ENCODE measurements at regions of chr10 and their contacts with region 1.

Region 1: GRCh38 chr10:17228091-17228940 is at the start of gene VIM:
- DNase-seq: peak; percentile 90
- H3K4me3 Mint-ChIP-seq: peak within 1 kb of the TSS; percentile 80
- H3K27ac Mint-ChIP-seq: peak within 1 kb of the TSS; percentile 73
- H3K4me1 Mint-ChIP-seq: peaks cover 45% of the 10 kb centered on the region
- H3K27me3 Mint-ChIP-seq: peaks cover 2% of the 10 kb centered on the region
- total RNA-seq, gene VIM: 58.3 to 60.6 TPM

Region 2: GRCh38 chr10:16891375-16892313 is 336.7 kb before region 1 on chr10:
- CTCF ChIA-PET with region 1: no interaction called
- intact Hi-C with region 1: loop called (anchors 1 kb)
- DNase-seq: peak; percentile 71
- H3K4me3 Mint-ChIP-seq: peak overlapping the region; percentile 52
- H3K27ac Mint-ChIP-seq: peak overlapping the region; percentile 69
- H3K4me1 Mint-ChIP-seq: peaks cover 8% of the 10 kb centered on the region
- H3K27me3 Mint-ChIP-seq: no peaks in the 10 kb centered on the region

Region 3: DNA sequence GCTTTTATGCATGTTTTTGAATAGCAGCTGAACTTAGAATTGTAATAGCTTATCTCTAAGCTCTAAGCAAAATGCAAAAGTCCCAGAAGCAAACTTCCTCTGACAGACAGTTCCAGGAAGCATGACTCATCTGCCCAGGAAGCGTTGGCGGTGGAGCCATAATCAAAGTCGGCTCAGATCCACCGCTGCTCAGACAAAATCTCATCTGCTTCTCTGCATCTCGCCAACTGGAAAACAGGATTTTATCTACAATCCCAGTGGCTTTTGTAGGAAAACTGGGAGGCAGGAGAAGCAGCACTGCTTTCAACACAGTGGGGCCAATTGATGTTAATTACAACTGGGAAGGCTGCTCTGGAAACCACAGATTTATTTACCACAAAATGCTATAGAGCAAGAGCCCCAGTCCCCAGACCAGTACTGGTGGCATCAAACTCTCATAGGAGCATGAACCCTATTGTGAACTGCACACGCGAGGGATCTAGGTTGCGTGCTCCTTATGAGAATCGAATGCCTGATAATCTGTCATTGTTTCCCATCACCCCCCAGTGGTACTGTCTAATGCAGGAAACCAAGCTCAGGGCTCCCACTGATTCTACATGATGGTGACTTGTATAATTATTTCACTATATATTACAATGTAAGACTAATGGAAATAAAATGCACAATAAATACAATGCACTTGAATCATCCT is 198.6 kb before region 1 on chr10:
- CTCF ChIA-PET with region 1: interaction called, 3 read pairs
- intact Hi-C with region 1: loop called (anchors 1 kb)
- DNase-seq: peak; percentile 94
- H3K4me3 Mint-ChIP-seq: peak overlapping the region; percentile 61
- H3K27ac Mint-ChIP-seq: peak overlapping the region; percentile 83
- H3K4me1 Mint-ChIP-seq: peaks cover 69% of the 10 kb centered on the region
- H3K27me3 Mint-ChIP-seq: no peaks in the 10 kb centered on the region

Region 4: GRCh38 chr10:17088118-17088806 is 140.1 kb before region 1 on chr10:
- CTCF ChIA-PET with region 1: no interaction called
- intact Hi-C with region 1: no loop called
- DNase-seq: no peak
- H3K4me3 Mint-ChIP-seq: no peak overlapping the region
- H3K27ac Mint-ChIP-seq: no peak overlapping the region
- H3K4me1 Mint-ChIP-seq: no peaks in the 10 kb centered on the region
- H3K27me3 Mint-ChIP-seq: no peaks in the 10 kb centered on the region

Region 5: DNA sequence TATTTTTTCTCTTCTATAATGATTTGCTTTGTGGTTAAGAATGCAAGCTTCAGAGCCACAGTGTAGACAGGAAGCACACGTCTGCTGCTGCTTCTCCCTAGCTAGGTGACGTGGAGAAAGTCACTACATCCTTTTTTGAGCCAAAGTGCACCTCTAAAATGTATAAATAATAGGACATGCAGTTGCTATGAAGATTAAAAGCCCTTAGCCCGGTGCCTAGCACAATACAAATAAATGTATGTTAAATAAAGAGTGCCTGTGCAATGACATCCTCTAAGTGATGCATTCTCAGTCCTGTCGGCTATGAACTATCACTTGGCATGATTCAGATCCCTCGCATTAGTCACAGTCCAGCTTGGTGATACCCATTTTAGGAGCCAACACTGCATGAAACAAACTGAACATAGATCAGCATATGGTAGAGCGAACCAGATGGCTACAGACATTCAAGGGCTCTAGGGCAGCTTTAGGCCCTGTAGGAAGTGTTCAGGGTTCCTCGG is 22.1 kb before region 1 on chr10:
- CTCF ChIA-PET with region 1: interaction called, 19 read pairs
- intact Hi-C with region 1: loop called (anchors 1 kb)
- DNase-seq: peak; percentile 60
- H3K4me3 Mint-ChIP-seq: peak overlapping the region; percentile 3
- H3K27ac Mint-ChIP-seq: peak overlapping the region; percentile 54
- H3K4me1 Mint-ChIP-seq: peaks cover 23% of the 10 kb centered on the region
- H3K27me3 Mint-ChIP-seq: no peaks in the 10 kb centered on the region

Region 6: DNA sequence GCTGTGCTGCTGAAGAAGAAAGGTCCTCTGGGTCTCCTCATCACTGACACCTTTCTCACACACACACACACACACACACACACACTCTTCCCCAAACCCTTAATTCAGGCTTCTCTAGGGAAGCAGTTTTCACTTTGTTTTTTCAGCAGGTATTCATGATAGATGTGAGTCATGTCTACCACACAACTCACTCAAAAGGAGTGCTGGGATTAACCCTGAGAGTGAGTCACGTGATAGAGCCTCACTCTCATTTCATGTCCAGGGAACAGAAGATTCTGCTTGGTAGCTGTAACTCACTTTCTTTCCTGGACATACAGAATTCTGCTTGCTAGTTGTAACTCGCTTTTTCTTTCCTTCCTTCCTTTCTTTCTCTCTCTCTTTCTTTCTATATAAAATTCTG is 45.1 kb after region 1 on chr10:
- CTCF ChIA-PET with region 1: no interaction called
- intact Hi-C with region 1: no loop called
- DNase-seq: peak; percentile 25
- H3K4me3 Mint-ChIP-seq: no peak overlapping the region
- H3K27ac Mint-ChIP-seq: no peak overlapping the region
- H3K4me1 Mint-ChIP-seq: peaks cover 8% of the 10 kb centered on the region
- H3K27me3 Mint-ChIP-seq: peaks cover 3% of the 10 kb centered on the region

Region 7: DNA sequence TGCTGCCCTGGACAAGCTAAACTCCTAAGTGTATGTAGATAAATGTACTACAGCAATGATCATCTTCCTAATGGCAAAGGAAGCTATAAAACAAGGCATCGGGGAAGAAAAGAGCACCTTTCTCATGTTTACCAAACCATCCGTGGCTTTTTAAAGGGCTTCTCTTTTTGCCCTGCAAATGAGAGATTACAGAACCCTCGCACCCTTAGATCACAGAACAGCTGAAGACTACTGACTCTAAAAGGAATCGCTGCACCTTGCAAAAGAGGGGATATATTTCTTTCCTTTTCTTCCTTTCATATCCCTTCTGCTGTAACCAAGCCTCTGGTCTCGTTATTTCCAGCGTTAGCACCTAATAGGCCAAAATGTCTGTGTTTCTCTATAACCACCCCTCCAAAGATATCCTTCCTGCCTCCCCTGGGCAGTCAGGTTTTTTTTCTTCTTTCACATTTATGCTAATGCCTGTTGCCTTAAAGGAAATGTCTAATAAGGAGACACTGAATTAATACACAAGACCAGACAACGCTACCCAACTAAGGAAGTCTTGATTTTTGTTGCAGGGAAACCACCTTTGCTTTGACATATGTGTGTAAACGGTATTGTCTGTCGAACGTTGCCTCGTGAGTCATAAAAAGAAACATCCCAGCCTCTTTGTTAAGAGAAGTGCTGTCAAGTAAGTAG is 215.5 kb after region 1 on chr10:
- CTCF ChIA-PET with region 1: no interaction called
- intact Hi-C with region 1: loop called (anchors 1 kb)
- DNase-seq: peak; percentile 61
- H3K4me3 Mint-ChIP-seq: peak overlapping the region; percentile 46
- H3K27ac Mint-ChIP-seq: peak overlapping the region; percentile 28
- H3K4me1 Mint-ChIP-seq: peaks cover 16% of the 10 kb centered on the region
- H3K27me3 Mint-ChIP-seq: peaks cover 3% of the 10 kb centered on the region

Region 8: DNA sequence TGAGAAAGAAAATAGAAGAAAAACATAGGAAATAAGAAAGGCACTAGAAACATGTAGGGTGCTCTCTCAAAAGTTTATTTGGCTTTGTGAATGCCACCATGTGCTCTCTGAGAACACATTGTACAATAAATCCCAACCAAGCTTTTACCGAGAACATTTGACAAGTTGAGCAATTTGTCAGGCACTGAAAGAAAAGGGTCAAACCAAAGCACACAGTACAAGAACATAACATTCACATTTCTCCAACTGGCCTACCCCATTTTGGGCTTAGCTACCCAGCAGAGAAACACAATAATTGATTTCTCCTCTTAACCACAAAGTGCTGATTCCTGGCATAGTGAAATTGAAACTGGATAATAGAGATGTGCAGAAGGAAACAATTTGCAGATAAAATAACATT is 654.2 kb after region 1 on chr10:
- CTCF ChIA-PET with region 1: no interaction called
- intact Hi-C with region 1: no loop called
- DNase-seq: no peak
- H3K4me3 Mint-ChIP-seq: no peak overlapping the region
- H3K27ac Mint-ChIP-seq: no peak overlapping the region
- H3K4me1 Mint-ChIP-seq: no peaks in the 10 kb centered on the region
- H3K27me3 Mint-ChIP-seq: peaks cover 2% of the 10 kb centered on the region

Measured in activated naive CD4-positive, alpha-beta T cell treated with anti-CD3 and anti-CD28 coated beads for 36 hours (primary cell).